ENCODE measurements at regions of chr14 and their contacts with region 1.

Region 1: GRCh38 chr14:68816262-68816942 is 23.5 kb upstream of the ZFP36L1 start:
- DNase-seq: peak; percentile 86
- ATAC-seq: peak; percentile 86
- H3K4me3 ChIP-seq: peak overlapping the region; percentile 38
- H3K27ac ChIP-seq: peak overlapping the region; percentile 92
- H3K4me1 ChIP-seq: peaks cover 24% of the 10 kb centered on the region
- H3K27me3 ChIP-seq: no peaks in the 10 kb centered on the region
- CTCF ChIP-seq: peak; percentile 97
- POLR2A ChIP-seq: 0 out of 2 replicates have a peak, but pooled peaks have one; percentile 16
- RAD21 ChIP-seq: peak; percentile 98

Region 2: DNA sequence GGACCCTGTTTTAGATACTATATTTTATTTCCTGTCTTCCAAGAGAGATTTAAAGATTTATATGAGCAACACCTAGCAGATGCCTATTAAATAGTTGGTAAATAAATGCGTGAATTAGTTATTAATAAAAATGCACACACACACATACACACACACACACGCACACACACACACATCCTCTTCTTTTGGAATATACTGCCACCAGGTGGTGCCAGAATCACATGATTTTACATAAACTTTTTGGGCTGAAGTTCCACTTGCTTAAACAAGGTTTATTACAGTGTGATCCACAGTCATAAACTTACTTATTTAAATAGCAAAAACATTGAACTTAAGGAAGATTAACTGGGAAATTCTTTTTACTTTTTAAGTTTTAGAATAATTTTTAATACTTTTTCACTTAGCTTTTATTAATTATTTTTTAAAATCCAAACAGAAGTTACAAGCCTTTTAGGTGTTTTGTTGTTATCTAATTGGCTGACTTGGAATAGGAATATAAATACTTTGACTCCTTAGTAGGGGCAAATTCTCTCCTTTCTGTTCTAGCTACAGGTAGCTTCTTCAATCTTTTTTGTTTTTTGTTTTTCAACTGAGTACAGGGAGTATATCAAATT is 979.3 kb before region 1 on chr14:
- CTCF ChIA-PET with region 1: no interaction called
- POLR2A ChIA-PET with region 1: no interaction called
- dilution Hi-C with region 1: no loop called
- in situ Hi-C with region 1: loop called (anchors 5 kb)
- intact Hi-C with region 1: loop called (anchors 5 kb)
- DNase-seq: peak; percentile 88
- ATAC-seq: peak; percentile 86
- H3K4me3 ChIP-seq: no peak overlapping the region
- H3K27ac ChIP-seq: no peak overlapping the region
- H3K4me1 ChIP-seq: no peaks in the 10 kb centered on the region
- H3K27me3 ChIP-seq: no peaks in the 10 kb centered on the region
- CTCF ChIP-seq: peak; percentile 80
- POLR2A ChIP-seq: no peak
- RAD21 ChIP-seq: peak; percentile 78

Region 3: GRCh38 chr14:67883717-67884116 is 932.7 kb before region 1 on chr14:
- CTCF ChIA-PET with region 1: no interaction called
- POLR2A ChIA-PET with region 1: no interaction called
- dilution Hi-C with region 1: no loop called
- in situ Hi-C with region 1: no loop called
- intact Hi-C with region 1: loop called (anchors 1 kb)
- DNase-seq: peak; percentile 28
- ATAC-seq: no peak
- H3K4me3 ChIP-seq: no peak overlapping the region
- H3K27ac ChIP-seq: no peak overlapping the region
- H3K4me1 ChIP-seq: no peaks in the 10 kb centered on the region
- H3K27me3 ChIP-seq: no peaks in the 10 kb centered on the region
- CTCF ChIP-seq: peak; percentile 53
- POLR2A ChIP-seq: no peak
- RAD21 ChIP-seq: peak; percentile 51

Region 4: DNA sequence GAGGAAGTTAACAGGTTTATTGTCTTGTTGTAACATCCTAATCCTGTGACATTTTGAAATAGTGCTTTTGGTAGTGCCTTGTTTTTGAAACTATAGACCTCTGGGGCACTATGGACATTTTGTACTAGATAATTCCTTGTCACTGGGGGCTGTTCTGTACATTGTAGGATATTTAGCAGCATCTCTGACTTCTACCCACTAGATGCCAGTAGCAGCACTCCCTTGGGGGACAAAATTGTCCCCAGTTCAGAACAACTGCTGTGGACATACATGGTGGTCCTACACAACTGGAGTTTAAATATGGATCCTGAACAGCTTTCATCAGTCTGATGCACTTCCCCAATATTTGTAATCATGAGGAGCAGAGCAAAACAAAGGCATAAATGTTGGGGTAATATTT is 732.1 kb before region 1 on chr14:
- CTCF ChIA-PET with region 1: no interaction called
- POLR2A ChIA-PET with region 1: no interaction called
- dilution Hi-C with region 1: no loop called
- in situ Hi-C with region 1: no loop called
- intact Hi-C with region 1: loop called (anchors 10 kb)
- DNase-seq: peak; percentile 45
- ATAC-seq: peak; percentile 48
- H3K4me3 ChIP-seq: no peak overlapping the region
- H3K27ac ChIP-seq: no peak overlapping the region
- H3K4me1 ChIP-seq: peaks cover 8% of the 10 kb centered on the region
- H3K27me3 ChIP-seq: no peaks in the 10 kb centered on the region
- CTCF ChIP-seq: peak; percentile 42
- POLR2A ChIP-seq: no peak
- RAD21 ChIP-seq: peak; percentile 65

Region 5: GRCh38 chr14:68297876-68298469 is 518.4 kb before region 1 on chr14:
- CTCF ChIA-PET with region 1: no interaction called
- POLR2A ChIA-PET with region 1: no interaction called
- dilution Hi-C with region 1: no loop called
- in situ Hi-C with region 1: no loop called
- intact Hi-C with region 1: loop called (anchors 2 kb)
- DNase-seq: peak; percentile 38
- ATAC-seq: peak; percentile 35
- H3K4me3 ChIP-seq: no peak overlapping the region
- H3K27ac ChIP-seq: no peak overlapping the region
- H3K4me1 ChIP-seq: no peaks in the 10 kb centered on the region; the same call in 1 of the 2 replicates
- H3K27me3 ChIP-seq: no peaks in the 10 kb centered on the region
- CTCF ChIP-seq: peak; percentile 51
- POLR2A ChIP-seq: no peak
- RAD21 ChIP-seq: peak; percentile 61

Region 6: GRCh38 chr14:68621400-68622365 is 194.7 kb before region 1 on chr14:
- CTCF ChIA-PET with region 1: no interaction called
- POLR2A ChIA-PET with region 1: no interaction called
- dilution Hi-C with region 1: no loop called
- in situ Hi-C with region 1: no loop called
- intact Hi-C with region 1: no loop called
- DNase-seq: peak; percentile 79
- ATAC-seq: peak; percentile 59
- H3K4me3 ChIP-seq: no peak overlapping the region
- H3K27ac ChIP-seq: no peak overlapping the region
- H3K4me1 ChIP-seq: peaks cover 9% of the 10 kb centered on the region; the same call in 1 of the 2 replicates
- H3K27me3 ChIP-seq: no peaks in the 10 kb centered on the region
- CTCF ChIP-seq: no peak
- POLR2A ChIP-seq: no peak
- RAD21 ChIP-seq: no peak